ENCODE measurements at regions of chr6 and their contacts with region 1.

Region 1: GRCh38 chr6:108558372-108559096 is 2.2 kb upstream of the FOXO3 start:
- DNase-seq: peak; percentile 93 to 100 (median 97)
- ATAC-seq: peak; percentile 67
- H3K4me3 ChIP-seq: peak overlapping the region; percentile 99
- H3K4me3 Mint-ChIP-seq: peak overlapping the region; percentile 99
- H3K27ac ChIP-seq: peak overlapping the region; percentile 99 to 100
- H3K27ac Mint-ChIP-seq: peak overlapping the region; percentile 100
- H3K4me1 ChIP-seq: peaks cover 29% of the 10 kb centered on the region
- H3K4me1 Mint-ChIP-seq: peaks cover 20% of the 10 kb centered on the region
- H3K27me3 ChIP-seq: no peaks in the 10 kb centered on the region
- H3K27me3 Mint-ChIP-seq: no peaks in the 10 kb centered on the region
- CTCF ChIP-seq: no peak

Region 2: DNA sequence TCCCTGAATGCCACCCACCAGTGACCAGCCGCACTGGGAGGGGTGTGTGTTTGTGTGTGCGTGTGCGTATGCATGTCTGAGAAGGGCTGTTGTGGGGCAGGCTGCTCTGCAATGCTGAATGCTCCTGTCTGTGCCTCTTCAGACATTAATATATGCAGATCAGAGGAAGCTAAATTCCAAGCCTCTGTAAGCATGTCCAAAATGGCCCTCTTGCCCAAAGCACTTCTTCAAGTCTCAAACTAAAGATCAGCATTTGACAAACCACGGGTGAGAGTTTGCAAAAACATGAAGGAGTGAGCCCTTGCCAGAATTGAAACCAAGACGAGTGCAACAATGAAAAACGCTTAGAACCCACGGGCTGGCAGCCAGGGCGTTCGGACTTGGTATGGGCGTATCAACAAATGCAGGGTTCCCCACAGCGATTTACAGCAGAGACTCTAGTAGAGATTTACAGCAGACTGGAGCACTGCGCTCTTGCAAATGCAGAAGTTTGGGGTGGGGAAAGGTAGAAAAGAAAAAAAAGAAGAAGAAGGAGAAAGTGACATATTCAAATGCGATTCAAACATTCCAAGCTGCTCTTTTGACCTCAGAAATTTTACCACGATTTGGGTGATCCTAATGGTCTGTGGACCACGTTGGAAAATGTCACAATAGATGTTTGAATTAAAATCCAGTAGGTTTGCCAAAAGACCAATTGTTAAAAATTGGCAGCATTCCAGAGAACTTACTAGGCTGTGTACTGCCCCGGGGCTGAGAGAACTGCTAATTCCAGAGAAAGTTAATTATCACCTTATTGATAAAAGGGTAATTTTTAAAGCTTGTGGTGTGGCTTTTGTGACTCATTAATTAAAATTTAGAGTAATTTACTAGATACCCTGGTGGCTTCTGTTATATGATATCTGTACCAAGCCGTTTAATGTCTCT is 737.9 kb before region 1 on chr6:
- CTCF ChIA-PET with region 1: no interaction called
- POLR2A ChIA-PET with region 1: interaction called, 8 read pairs
- intact Hi-C with region 1: loop called in 1 of 2 experiments (anchors 5 kb)
- DNase-seq: peak; percentile 39 to 69 (median 49)
- ATAC-seq: no peak
- H3K4me3 ChIP-seq: peak overlapping the region; percentile 74
- H3K4me3 Mint-ChIP-seq: peak overlapping the region; percentile 96
- H3K27ac ChIP-seq: peak overlapping the region; percentile 87 to 88
- H3K27ac Mint-ChIP-seq: peak overlapping the region; percentile 96
- H3K4me1 ChIP-seq: peaks cover 64% of the 10 kb centered on the region
- H3K4me1 Mint-ChIP-seq: peaks cover 87% of the 10 kb centered on the region
- H3K27me3 ChIP-seq: no peaks in the 10 kb centered on the region
- H3K27me3 Mint-ChIP-seq: no peaks in the 10 kb centered on the region
- CTCF ChIP-seq: no peak

Region 3: GRCh38 chr6:108541838-108542759 is 16.4 kb before region 1 on chr6:
- CTCF ChIA-PET with region 1: interaction called, 17 read pairs
- POLR2A ChIA-PET with region 1: interaction called, 10 read pairs
- intact Hi-C with region 1: no loop called
- DNase-seq: peak; percentile 56 to 88 (median 61)
- ATAC-seq: peak; percentile 91
- H3K4me3 ChIP-seq: no peak overlapping the region
- H3K4me3 Mint-ChIP-seq: no peak overlapping the region
- H3K27ac ChIP-seq: no peak overlapping the region
- H3K27ac Mint-ChIP-seq: no peak overlapping the region
- H3K4me1 ChIP-seq: peaks cover 12% of the 10 kb centered on the region
- H3K4me1 Mint-ChIP-seq: peaks cover 7% of the 10 kb centered on the region
- H3K27me3 ChIP-seq: no peaks in the 10 kb centered on the region
- H3K27me3 Mint-ChIP-seq: peaks cover 5% of the 10 kb centered on the region
- CTCF ChIP-seq: peak; percentile 89

Region 4: DNA sequence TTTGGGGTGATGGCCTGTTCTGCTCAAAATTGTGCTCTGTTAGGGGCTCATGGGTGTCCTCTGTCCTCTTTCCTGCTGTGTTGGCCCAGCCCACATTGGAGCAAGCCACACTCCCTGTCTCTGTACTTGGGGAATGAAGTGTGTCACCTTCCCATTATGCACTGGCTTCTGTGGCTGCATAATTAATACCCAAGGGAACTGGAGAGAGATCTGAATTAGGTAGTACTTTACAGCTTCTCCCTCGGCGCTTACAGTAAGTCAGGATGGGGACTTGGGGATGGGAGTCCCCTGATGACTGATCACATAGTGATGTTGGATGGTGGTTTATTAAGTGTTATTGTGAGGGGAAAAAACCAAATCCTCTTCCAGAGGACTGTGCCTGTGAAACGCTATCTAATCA is 118.8 kb after region 1 on chr6:
- CTCF ChIA-PET with region 1: no interaction called
- POLR2A ChIA-PET with region 1: no interaction called
- intact Hi-C with region 1: loop called in 1 of 2 experiments (anchors 5 kb)
- DNase-seq: no peak
- ATAC-seq: no peak
- H3K4me3 ChIP-seq: no peak overlapping the region
- H3K4me3 Mint-ChIP-seq: no peak overlapping the region
- H3K27ac ChIP-seq: no peak overlapping the region
- H3K27ac Mint-ChIP-seq: no peak overlapping the region
- H3K4me1 ChIP-seq: peaks cover 6% of the 10 kb centered on the region
- H3K4me1 Mint-ChIP-seq: peaks cover 28% of the 10 kb centered on the region
- H3K27me3 ChIP-seq: no peaks in the 10 kb centered on the region
- H3K27me3 Mint-ChIP-seq: no peaks in the 10 kb centered on the region
- CTCF ChIP-seq: no peak

Region 5: DNA sequence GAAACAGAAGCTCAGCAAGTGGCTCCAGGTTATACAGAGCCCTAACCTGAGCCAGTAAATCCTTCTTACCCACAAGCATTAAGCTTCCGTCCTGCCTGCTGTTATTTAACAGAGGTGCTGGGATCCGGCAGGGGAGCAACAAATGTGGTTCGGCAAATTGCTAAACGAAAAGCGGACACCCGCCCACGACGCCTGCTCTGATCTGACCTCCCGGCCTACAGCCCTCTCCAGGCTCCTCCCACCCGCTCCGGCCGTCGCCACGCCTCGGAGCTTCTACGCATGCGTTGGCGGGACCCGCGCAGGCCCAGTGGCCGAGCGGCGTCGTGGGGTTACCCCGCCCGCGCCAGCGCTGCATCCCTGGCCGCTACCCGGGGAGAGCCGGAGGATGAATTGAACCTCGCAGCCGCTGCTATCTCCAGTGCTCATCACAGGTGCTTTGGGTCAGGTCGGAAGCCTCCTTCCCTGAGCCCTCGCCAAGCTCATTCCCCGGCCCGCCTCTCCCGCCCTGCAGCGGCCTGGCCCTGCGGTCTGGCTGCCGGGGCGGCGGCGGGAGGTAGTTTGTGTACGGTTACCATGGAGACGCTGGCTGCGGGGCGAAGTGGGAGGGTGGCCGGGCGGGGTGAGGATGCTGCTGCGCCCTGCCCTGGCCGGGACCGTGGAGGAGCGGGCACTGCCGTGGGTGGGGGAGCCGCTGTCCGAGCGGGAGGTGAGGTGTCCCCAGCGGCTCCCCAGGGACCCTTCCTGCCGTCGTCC is 289.8 kb after region 1 on chr6 and contains the start of gene ARMC2:
- CTCF ChIA-PET with region 1: no interaction called
- POLR2A ChIA-PET with region 1: interaction called, 24 read pairs
- intact Hi-C with region 1: loop called in 1 of 2 experiments (anchors 1 kb)
- DNase-seq: peak; percentile 69 to 94 (median 80)
- ATAC-seq: peak; percentile 78
- H3K4me3 ChIP-seq: peak within 1 kb of the TSS; percentile 67
- H3K4me3 Mint-ChIP-seq: peak within 1 kb of the TSS; percentile 92
- H3K27ac ChIP-seq: peak within 1 kb of the TSS; percentile 54 to 61
- H3K27ac Mint-ChIP-seq: peak within 1 kb of the TSS; percentile 88
- H3K4me1 ChIP-seq: peaks cover 16% of the 10 kb centered on the region
- H3K4me1 Mint-ChIP-seq: peaks cover 35% of the 10 kb centered on the region
- H3K27me3 ChIP-seq: no peaks in the 10 kb centered on the region
- H3K27me3 Mint-ChIP-seq: no peaks in the 10 kb centered on the region
- CTCF ChIP-seq: no peak
- total RNA-seq, gene ARMC2: 5.2 to 5.7 TPM

Region 6: DNA sequence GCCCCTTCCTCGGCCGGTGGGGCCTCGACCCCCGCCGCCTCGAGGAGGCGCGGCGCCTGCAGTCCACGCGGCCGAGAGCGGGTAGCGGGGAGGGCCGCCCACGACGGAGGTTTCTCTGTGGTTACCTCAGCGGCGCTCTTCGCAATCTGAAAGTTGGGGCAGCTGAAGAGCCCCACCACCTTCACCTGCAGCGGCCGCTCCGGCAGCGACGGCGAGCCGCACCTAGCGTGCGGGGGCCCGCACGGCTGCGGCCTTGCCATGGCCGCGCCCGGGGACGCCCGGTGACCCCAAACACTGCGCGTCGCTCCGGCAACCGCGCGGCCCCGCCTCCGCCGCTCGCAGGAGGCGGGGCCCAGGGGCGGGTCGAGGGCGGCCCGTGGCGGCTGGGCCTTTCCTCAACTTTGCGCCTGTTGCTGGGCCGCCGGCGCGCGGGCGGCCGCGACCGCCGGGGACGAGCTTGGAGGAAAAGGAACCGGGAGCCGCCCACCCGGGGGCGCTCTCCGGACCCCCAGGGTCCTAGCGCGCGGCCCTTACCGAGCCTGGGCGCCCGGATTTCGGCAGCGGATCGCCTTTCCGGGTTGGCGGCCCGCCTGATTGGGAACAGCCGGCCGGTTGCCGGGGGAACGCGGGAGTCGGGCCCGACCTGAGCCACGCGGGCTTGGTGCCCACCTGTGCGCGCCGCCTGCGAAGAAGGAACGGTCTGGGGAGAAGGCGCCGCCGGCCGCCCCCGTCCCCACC is 882.0 kb after region 1 on chr6 and contains the starts of genes PPIL6 and SMPD2:
- CTCF ChIA-PET with region 1: no interaction called
- POLR2A ChIA-PET with region 1: interaction called, 8 read pairs
- intact Hi-C with region 1: loop called in 1 of 2 experiments (anchors 5 kb)
- DNase-seq: peak; percentile 54 to 92 (median 73)
- ATAC-seq: peak; percentile 75
- H3K4me3 ChIP-seq: peak within 1 kb of the TSS; percentile 81
- H3K4me3 Mint-ChIP-seq: peak within 1 kb of the TSS; percentile 95
- H3K27ac ChIP-seq: peak within 1 kb of the TSS; percentile 74 to 82
- H3K27ac Mint-ChIP-seq: peak within 1 kb of the TSS; percentile 93
- H3K4me1 ChIP-seq: peaks cover 39% of the 10 kb centered on the region
- H3K4me1 Mint-ChIP-seq: peaks cover 27% of the 10 kb centered on the region
- H3K27me3 ChIP-seq: no peaks in the 10 kb centered on the region
- H3K27me3 Mint-ChIP-seq: no peaks in the 10 kb centered on the region
- CTCF ChIP-seq: peak; percentile 4
- total RNA-seq, gene PPIL6: 0.84 to 1.3 TPM
- total RNA-seq, gene SMPD2: 25.7 to 27.3 TPM

Measured in CD4-positive, alpha-beta T cell (primary cell).